ENCODE measurements at regions of chr6 and their contacts with region 1.

Region 1: GRCh38 chr6:53171605-53172446 is 23.2 kb upstream of the GCM1 start:
- DNase-seq: peak; percentile 91
- ATAC-seq: peak; percentile 98
- H3K4me3 Mint-ChIP-seq: peak overlapping the region; percentile 68
- H3K27ac Mint-ChIP-seq: peak overlapping the region; percentile 87
- H3K4me1 Mint-ChIP-seq: peaks cover 24% of the 10 kb centered on the region
- H3K27me3 Mint-ChIP-seq: no peaks in the 10 kb centered on the region
- CTCF ChIP-seq: peak; percentile 100

Region 2: GRCh38 chr6:53244958-53245357 is 73.1 kb after region 1 on chr6:
- CTCF ChIA-PET with region 1: interaction called, 14 read pairs
- POLR2A ChIA-PET with region 1: interaction called, 14 read pairs
- intact Hi-C with region 1: loop called (anchors 1 kb)
- DNase-seq: peak; percentile 42
- ATAC-seq: peak; percentile 83
- H3K4me3 Mint-ChIP-seq: peak overlapping the region; percentile 63
- H3K27ac Mint-ChIP-seq: peak overlapping the region; percentile 96
- H3K4me1 Mint-ChIP-seq: peaks cover 93% of the 10 kb centered on the region
- H3K27me3 Mint-ChIP-seq: no peaks in the 10 kb centered on the region
- CTCF ChIP-seq: no peak

Region 3: GRCh38 chr6:53300656-53301551 is 129.1 kb after region 1 on chr6:
- CTCF ChIA-PET with region 1: interaction called, 106 read pairs
- POLR2A ChIA-PET with region 1: no interaction called
- intact Hi-C with region 1: no loop called
- DNase-seq: no peak
- ATAC-seq: peak; percentile 68
- H3K4me3 Mint-ChIP-seq: peak overlapping the region; percentile 45
- H3K27ac Mint-ChIP-seq: peak overlapping the region; percentile 78
- H3K4me1 Mint-ChIP-seq: peaks cover 85% of the 10 kb centered on the region
- H3K27me3 Mint-ChIP-seq: no peaks in the 10 kb centered on the region
- CTCF ChIP-seq: no peak

Region 4: DNA sequence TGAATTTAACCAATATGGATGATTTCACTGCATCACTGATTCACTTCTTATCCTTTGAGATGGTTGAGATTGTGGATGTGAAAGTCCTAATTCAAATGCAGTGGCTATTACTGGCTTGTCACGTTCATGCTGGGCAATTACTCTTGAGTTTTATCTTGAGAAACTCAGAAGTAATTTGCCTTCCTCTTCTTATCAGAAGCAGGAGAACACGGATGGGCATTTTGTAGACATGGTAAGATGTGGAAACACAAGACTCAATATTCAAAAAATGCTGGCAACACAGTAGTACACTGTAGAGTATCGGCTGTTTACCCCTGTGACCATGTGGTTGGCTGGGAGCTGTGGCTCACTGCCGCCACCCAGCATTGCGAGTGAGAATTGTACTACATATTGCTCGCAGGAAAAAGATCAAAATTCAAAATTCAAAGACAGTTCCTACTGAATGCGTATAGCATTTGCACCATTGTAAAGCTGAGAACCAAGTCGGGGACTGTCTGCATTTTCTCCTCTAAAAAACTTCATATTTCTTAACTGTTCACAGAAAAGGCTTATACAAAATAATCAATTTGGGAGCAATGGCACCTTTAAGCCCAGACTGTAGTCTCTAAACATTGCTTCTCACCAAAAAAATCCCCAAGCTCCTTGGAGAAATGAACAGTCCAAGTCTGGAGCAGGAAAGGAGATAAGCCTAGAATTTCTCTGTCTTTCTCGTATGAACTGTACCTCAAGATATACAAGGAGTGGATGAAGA is 238.9 kb after region 1 on chr6:
- CTCF ChIA-PET with region 1: interaction called, 65 read pairs
- POLR2A ChIA-PET with region 1: interaction called, 22 read pairs
- intact Hi-C with region 1: loop called (anchors 1 kb)
- DNase-seq: peak; percentile 20
- ATAC-seq: peak; percentile 98
- H3K4me3 Mint-ChIP-seq: peak overlapping the region; percentile 70
- H3K27ac Mint-ChIP-seq: peak overlapping the region; percentile 82
- H3K4me1 Mint-ChIP-seq: peaks cover 9% of the 10 kb centered on the region
- H3K27me3 Mint-ChIP-seq: no peaks in the 10 kb centered on the region
- CTCF ChIP-seq: no peak

Region 5: GRCh38 chr6:53544470-53545308 is 372.9 kb after region 1 on chr6 and contains the start of gene GCLC:
- CTCF ChIA-PET with region 1: no interaction called
- POLR2A ChIA-PET with region 1: no interaction called
- intact Hi-C with region 1: loop called (anchors 1 kb)
- DNase-seq: peak; percentile 87
- ATAC-seq: peak; percentile 71
- H3K4me3 Mint-ChIP-seq: peak within 1 kb of the TSS; percentile 93
- H3K27ac Mint-ChIP-seq: peak within 1 kb of the TSS; percentile 91
- H3K4me1 Mint-ChIP-seq: peaks cover 67% of the 10 kb centered on the region
- H3K27me3 Mint-ChIP-seq: no peaks in the 10 kb centered on the region
- CTCF ChIP-seq: peak; percentile 37
- total RNA-seq, gene GCLC: 26.6 and 27.1 TPM in 2 replicates